OCI-LY7 (cell line): ENCODE measurements at regions of chr20 and their contacts with region 1.

Region 1: DNA sequence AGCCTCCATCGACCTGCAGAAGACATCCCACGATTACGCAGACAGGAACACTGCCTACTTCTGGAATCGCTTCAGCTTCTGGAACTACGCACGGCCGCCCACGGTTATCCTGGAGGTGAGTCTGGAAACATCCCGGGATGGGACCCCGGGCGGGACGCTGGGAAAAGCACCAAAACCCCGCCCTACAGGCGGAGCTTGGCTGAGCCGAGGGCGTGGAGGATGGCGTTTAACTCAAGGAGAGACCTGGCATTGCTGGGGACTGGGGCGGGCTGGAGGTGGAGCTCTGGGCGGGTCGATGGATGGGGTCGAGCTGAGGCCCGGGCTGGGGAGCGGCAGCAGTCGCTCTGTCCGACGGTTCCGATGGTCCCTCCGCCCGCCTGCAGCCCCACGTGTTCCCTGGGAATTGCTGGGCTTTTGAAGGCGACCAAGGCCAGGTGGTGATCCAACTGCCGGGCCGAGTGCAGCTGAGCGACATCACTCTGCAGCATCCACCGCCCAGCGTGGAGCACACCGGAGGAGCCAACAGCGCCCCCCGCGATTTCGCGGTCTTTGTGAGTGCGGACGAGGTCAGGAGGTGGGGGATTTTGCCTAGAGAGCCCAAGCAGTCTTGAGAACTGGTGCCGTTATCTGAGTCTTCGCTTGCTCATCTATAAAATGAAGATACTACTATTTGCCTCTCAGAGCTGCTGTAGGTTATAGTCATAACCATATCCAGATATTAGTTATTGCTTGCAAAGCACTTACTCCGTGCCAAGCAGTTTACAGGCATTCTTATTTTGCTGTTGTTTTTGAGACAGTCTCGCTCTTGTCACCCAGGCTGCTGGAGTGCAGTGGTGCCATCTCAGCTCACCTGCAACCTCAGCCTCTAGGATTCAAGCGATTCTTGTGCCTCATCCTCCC is 3.8 kb downstream of the SPAG4 start:
- DNase-seq: peak; percentile 91
- H3K4me3 ChIP-seq: peak overlapping the region; percentile 73
- H3K27ac ChIP-seq: peak overlapping the region; percentile 37
- H3K4me1 ChIP-seq: peaks cover 36% of the 10 kb centered on the region
- CTCF ChIP-seq: peak; percentile 96

Region 2: DNA sequence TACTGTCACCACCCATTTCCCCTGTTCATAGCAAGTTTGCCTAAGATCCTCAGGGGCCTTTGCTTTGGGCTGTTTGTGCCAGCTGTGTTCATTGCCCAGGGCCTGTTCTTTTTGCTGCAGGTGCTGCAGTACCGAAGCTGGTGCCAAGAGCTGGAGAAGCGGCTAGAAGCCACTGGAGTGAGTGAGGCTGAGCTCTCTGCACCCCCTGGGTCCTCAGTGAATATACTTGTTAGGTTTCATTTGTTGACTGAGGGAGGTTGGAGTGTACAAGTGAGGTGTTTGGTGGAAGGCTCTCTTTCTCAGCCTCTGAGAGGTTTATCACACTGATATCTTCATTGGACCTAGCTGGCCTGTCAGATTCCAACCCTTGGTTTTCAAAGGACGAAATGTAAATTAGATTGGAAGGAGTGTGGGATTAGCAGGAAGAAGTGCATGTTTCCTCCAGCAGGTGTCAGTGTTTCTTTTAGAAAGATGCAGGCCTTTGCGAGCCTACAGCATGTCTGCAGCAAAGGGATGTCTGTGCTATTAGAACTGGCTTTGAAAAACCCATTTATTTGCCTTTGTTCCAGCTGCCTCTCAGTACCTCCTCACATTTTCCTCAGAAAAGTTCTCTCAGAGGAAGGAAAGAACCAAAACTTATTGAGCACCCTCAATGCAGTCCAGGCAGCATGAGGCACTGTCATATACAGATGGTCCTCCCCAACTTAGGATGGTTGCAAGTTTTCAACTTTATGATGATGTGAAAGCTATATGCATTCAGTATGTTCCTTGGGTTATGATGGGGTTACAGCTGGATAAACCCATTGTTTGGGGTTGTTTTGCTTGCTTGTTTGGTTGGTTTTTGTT is 155.8 kb before region 1 on chr20:
- CTCF ChIA-PET with region 1: no interaction called
- POLR2A ChIA-PET with region 1: no interaction called
- intact Hi-C with region 1: loop called (anchors 1 kb)
- DNase-seq: peak; percentile 80
- H3K4me3 ChIP-seq: no peak overlapping the region
- H3K27ac ChIP-seq: no peak overlapping the region
- H3K4me1 ChIP-seq: peaks cover 22% of the 10 kb centered on the region
- CTCF ChIP-seq: peak; percentile 98

Region 3: DNA sequence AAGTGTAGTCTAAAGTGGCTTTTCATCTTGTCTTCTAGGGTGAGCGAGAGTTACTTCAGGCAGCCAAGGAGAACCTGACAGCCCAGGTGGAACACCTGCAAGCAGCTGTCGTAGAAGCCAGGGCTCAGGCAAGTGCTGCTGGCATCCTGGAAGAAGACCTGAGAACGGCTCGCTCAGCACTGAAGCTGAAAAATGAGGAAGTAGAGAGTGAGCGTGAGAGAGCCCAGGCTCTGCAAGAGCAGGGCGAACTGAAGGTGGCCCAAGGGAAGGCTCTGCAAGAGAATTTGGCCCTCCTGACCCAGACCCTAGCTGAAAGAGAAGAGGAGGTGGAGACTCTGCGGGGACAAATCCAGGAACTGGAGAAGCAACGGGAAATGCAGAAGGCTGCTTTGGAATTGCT is 117.1 kb before region 1 on chr20:
- CTCF ChIA-PET with region 1: no interaction called
- POLR2A ChIA-PET with region 1: no interaction called
- intact Hi-C with region 1: no loop called
- DNase-seq: peak; percentile 93
- H3K4me3 ChIP-seq: no peak overlapping the region
- H3K27ac ChIP-seq: peak overlapping the region; percentile 64
- H3K4me1 ChIP-seq: peaks cover 31% of the 10 kb centered on the region
- CTCF ChIP-seq: no peak

Region 4: GRCh38 chr20:35561268-35561667 is 58.2 kb before region 1 on chr20:
- CTCF ChIA-PET with region 1: interaction called, 4 read pairs
- POLR2A ChIA-PET with region 1: interaction called, 5 read pairs
- intact Hi-C with region 1: loop called (anchors 1 kb)
- DNase-seq: peak; percentile 82
- H3K4me3 ChIP-seq: no peak overlapping the region
- H3K27ac ChIP-seq: peak overlapping the region; percentile 43
- H3K4me1 ChIP-seq: peaks cover 13% of the 10 kb centered on the region
- CTCF ChIP-seq: peak; percentile 83

Region 5: DNA sequence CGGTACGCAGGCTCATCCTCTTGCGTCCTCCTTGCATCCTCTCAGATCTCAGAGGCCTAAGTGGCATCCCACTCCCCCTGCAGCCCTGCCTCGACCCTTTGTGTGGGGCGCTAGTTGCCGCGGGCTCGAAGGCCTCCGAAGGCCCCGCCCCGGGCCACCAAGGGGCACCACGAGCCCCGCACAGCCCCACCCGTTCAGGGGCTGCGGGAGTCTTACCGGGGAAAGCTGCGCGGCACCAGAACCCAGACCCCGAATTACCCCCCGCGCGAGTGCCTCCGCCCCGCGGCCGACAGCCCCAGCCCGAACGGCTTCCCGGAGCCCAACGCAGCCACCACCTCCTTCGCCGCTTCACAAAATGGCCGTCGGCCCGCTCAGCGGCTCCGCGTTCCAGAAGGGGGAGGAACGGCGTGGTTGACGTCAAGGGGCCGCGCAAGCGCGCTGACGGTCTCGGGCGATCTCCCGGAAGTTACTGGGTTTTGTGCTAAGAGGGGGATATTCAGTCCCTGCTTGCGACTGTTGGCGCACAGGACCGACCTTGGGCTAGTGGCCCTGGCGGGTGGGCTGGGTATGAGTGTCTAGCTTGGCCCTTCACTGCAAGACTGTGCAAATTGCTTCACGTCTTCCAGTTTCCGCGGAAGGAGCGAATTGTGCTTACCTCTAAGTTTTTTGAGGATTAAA is 45.2 kb after region 1 on chr20 and contains the starts of genes CPNE1 and RBM12:
- CTCF ChIA-PET with region 1: no interaction called
- POLR2A ChIA-PET with region 1: interaction called, 4 read pairs
- intact Hi-C with region 1: loop called (anchors 1 kb)
- DNase-seq: peak; percentile 95
- H3K4me3 ChIP-seq: peak within 1 kb of the TSS; percentile 76
- H3K27ac ChIP-seq: peak within 1 kb of the TSS; percentile 74
- H3K4me1 ChIP-seq: peaks cover 31% of the 10 kb centered on the region
- CTCF ChIP-seq: no peak
- total RNA-seq, gene CPNE1: 83.3 and 83.7 TPM in 2 replicates
- total RNA-seq, gene RBM12: 63.8 and 66.3 TPM in 2 replicates

Region 6: DNA sequence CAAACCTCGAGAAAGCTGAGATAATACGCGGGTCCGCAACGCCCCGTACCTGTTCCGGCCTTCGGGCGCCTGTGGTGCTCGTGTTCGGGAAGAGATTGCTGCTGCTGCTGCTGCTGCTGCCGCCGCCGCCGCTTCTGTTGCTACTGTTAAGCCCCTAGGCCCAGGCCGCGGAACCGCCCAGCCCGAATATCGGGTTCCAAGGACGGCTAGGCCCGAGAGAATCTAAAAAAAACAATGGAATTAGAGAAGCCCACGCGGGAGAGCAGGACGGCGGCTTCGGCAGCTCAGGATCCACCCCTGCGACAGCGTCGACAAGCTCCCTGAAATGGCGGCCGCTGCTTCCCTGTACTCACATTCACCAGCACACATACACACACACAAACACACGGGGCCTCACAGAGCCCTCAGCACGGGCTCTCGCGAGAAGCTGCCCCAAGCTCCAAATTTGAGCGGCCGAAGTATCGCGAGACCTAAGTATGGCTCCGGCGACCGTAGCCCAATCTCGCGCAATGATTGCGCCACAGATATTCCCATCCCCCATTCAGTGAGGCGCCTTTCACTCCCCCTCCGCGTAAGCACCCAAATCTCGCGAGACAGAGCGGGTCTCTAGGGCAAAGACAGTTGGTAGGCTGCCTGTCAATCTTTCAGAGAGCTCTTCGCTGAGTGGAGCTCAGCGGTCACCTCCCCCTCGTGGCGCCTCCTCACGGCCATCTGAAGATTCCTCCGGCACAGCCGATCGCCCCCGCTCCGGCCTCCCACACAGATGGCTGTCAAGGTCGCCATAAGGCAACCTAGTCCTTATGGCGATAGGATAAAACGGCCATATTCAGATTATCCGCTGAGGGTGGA is 122.7 kb after region 1 on chr20 and contains the start of gene RBM39:
- CTCF ChIA-PET with region 1: no interaction called
- POLR2A ChIA-PET with region 1: interaction called, 6 read pairs
- intact Hi-C with region 1: loop called (anchors 2 kb)
- DNase-seq: peak; percentile 100
- H3K4me3 ChIP-seq: peak within 1 kb of the TSS; percentile 95
- H3K27ac ChIP-seq: peak within 1 kb of the TSS; percentile 96
- H3K4me1 ChIP-seq: peaks cover 42% of the 10 kb centered on the region
- CTCF ChIP-seq: peak; percentile 33; the same call in 1 of the 2 replicates
- total RNA-seq, gene RBM39: 346 and 448 TPM in 2 replicates